A549 (cell line): ENCODE measurements at regions of chr16 and their contacts with region 1.

Region 1: GRCh38 chr16:24516900-24517669 is 22.3 kb upstream of the RBBP6 start:
- DNase-seq: peak; percentile 74 to 91
- ATAC-seq: peak; percentile 91 to 94
- H3K4me3 ChIP-seq: peak overlapping the region; percentile 31
- H3K27ac ChIP-seq: peak overlapping the region in 1 of 2 experiments; percentile 74; a peak in 3 of 6 replicates
- H3K4me1 ChIP-seq: no peaks in the 10 kb centered on the region
- CTCF ChIP-seq: peak; percentile 94
- EP300 ChIP-seq: no peak
- POLR2A ChIP-seq: no peak
- RAD21 ChIP-seq: peak; percentile 86 to 90

Region 2: DNA sequence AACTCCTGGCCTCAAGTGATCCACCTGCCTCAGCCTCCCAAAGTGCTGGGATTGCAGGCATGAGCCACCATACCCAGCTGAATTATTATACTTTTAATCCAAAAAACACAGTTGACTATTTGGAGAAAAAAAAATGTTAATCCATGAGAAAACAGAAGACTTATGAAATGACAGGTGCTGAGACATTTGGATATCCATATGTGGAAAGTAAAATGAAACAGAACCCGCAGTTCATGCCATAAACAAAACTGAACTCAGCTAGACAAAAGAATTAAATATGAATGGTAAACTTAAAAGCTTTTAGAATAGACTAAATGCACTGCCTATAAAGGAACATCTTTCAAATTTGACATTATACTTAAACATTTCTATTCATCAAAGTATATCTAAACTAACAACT is 14.1 kb after region 1 on chr16:
- CTCF ChIA-PET with region 1: interaction called, 27 read pairs
- POLR2A ChIA-PET with region 1: no interaction called
- DNase-seq: no peak
- ATAC-seq: no peak
- H3K4me3 ChIP-seq: no peak overlapping the region
- H3K27ac ChIP-seq: no peak overlapping the region
- H3K4me1 ChIP-seq: peaks cover 22% of the 10 kb centered on the region
- CTCF ChIP-seq: no peak
- EP300 ChIP-seq: no peak
- POLR2A ChIP-seq: no peak
- RAD21 ChIP-seq: no peak

Region 3: GRCh38 chr16:24539850-24540601 is 22.9 kb after region 1 on chr16:
- CTCF ChIA-PET with region 1: interaction called, 27 read pairs
- POLR2A ChIA-PET with region 1: interaction called, 5 read pairs
- DNase-seq: peak in 1 of 2 experiments; percentile 52
- ATAC-seq: peak; percentile 37 to 48
- H3K4me3 ChIP-seq: peak overlapping the region; percentile 92
- H3K27ac ChIP-seq: peak overlapping the region; percentile 98 to 99
- H3K4me1 ChIP-seq: peaks cover 50% of the 10 kb centered on the region; the same call in 2 of the 3 replicates
- CTCF ChIP-seq: no peak
- EP300 ChIP-seq: no peak
- POLR2A ChIP-seq: no peak
- RAD21 ChIP-seq: no peak

Region 4: DNA sequence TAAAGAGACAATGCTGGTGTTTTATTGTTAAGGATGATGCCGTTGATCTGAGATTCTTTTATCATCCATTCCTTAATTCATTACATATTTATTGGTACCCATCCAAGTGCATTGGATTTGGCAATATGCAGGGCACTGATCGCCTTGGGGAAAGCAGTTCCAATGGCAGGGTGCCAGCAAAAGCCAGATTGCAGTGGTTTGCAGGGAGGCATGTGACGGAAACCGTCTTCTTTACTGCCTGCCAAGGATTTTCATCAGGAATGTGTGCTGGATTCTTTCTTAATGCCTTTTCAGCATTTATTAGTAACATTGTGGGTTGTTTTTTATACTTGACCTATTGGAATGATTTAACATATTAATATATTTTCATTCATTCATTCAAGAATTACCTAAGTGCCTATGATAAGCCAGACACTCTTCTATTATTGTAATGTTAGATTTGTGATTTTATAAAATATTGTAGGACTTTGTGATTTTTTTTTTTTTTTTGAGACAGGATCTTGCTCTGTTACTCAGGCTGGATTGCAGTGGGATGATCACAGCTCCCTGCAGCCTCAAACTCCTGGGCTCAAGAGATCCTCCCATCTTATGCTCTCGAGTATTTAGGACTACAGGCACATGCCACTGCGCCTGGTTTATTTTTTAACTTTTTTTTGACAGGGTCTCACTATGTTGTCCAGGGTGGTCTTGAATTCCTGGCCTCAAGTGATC is 119.0 kb after region 1 on chr16:
- CTCF ChIA-PET with region 1: no interaction called
- POLR2A ChIA-PET with region 1: no interaction called
- DNase-seq: peak; percentile 84 to 92
- ATAC-seq: peak; percentile 91 to 99
- H3K4me3 ChIP-seq: no peak overlapping the region
- H3K27ac ChIP-seq: peak overlapping the region; percentile 80 to 91
- H3K4me1 ChIP-seq: peaks cover 31% of the 10 kb centered on the region
- CTCF ChIP-seq: no peak
- EP300 ChIP-seq: peak; percentile 71 to 89; a peak in 3 of 5 replicates
- POLR2A ChIP-seq: no peak
- RAD21 ChIP-seq: peak in 1 of 2 experiments; percentile 51; a peak in 3 of 5 replicates